OCI-LY7 (cell line): ENCODE measurements at regions of chr10 and their contacts with region 1.

Region 1: GRCh38 chr10:128125944-128126764 is at the start of gene MKI67:
- DNase-seq: peak; percentile 95
- H3K4me3 ChIP-seq: peak within 1 kb of the TSS; percentile 92
- H3K27ac ChIP-seq: peak within 1 kb of the TSS; percentile 72
- H3K4me1 ChIP-seq: peaks cover 38% of the 10 kb centered on the region
- CTCF ChIP-seq: no peak
- total RNA-seq, gene MKI67: 139 and 165 TPM in 2 replicates

Region 2: DNA sequence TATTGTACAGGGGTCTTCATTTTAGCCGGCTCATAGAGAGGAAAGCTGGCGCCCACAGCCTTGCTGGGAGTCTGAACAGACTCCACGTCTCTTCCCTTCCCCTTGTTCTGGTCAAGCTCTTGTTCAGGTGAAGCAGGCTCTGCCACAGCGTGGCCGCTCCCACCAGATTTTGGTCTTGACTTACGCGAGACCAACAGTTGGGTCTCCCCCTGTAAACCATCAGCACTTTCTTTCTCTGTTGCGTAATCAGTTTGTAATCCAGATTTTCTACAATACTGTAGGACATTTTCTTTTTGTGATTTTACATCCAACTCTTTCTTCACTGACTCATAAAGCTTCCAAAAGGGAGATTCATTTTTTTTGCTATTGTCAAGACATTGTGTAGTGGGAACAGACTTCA is 10.8 kb before region 1 on chr10:
- CTCF ChIA-PET with region 1: no interaction called
- POLR2A ChIA-PET with region 1: interaction called, 10 read pairs
- intact Hi-C with region 1: no loop called
- DNase-seq: no peak
- H3K4me3 ChIP-seq: no peak overlapping the region
- H3K27ac ChIP-seq: no peak overlapping the region
- H3K4me1 ChIP-seq: no peaks in the 10 kb centered on the region
- CTCF ChIP-seq: no peak

Region 3: GRCh38 chr10:128254476-128254875 is 128.3 kb after region 1 on chr10:
- CTCF ChIA-PET with region 1: no interaction called
- POLR2A ChIA-PET with region 1: no interaction called
- intact Hi-C with region 1: no loop called
- DNase-seq: no peak
- H3K4me3 ChIP-seq: no peak overlapping the region
- H3K27ac ChIP-seq: no peak overlapping the region
- H3K4me1 ChIP-seq: no peaks in the 10 kb centered on the region
- CTCF ChIP-seq: no peak